PC-3 (cell line): ENCODE measurements at regions of chr5 and their contacts with region 1.

Region 1: GRCh38 chr5:140639148-140639979 is at the start of gene TMCO6:
- DNase-seq: peak; percentile 93
- ATAC-seq: peak; percentile 97
- H3K4me3 ChIP-seq: peak within 1 kb of the TSS; percentile 97
- H3K27ac ChIP-seq: peak within 1 kb of the TSS; percentile 39; the same call in 1 of the 2 replicates
- H3K4me1 ChIP-seq: peaks cover 9% of the 10 kb centered on the region; the same call in 1 of the 2 replicates
- H3K27me3 ChIP-seq: no peaks in the 10 kb centered on the region
- CTCF ChIP-seq: peak; percentile 56
- total RNA-seq, gene TMCO6: 12.7 and 16.5 TPM in 2 replicates

Region 2: GRCh38 chr5:140182803-140183367 is 456.5 kb before region 1 on chr5:
- CTCF ChIA-PET with region 1: no interaction called
- POLR2A ChIA-PET with region 1: interaction called, 17 read pairs
- intact Hi-C with region 1: no loop called
- DNase-seq: no peak
- ATAC-seq: no peak
- H3K4me3 ChIP-seq: no peak overlapping the region
- H3K27ac ChIP-seq: no peak overlapping the region
- H3K4me1 ChIP-seq: peaks cover 16% of the 10 kb centered on the region
- H3K27me3 ChIP-seq: no peaks in the 10 kb centered on the region
- CTCF ChIP-seq: no peak

Region 3: GRCh38 chr5:140564196-140565023 is 75.0 kb before region 1 on chr5 and contains the starts of genes APBB3 and SLC35A4:
- CTCF ChIA-PET with region 1: no interaction called
- POLR2A ChIA-PET with region 1: no interaction called
- intact Hi-C with region 1: loop called (anchors 2 kb)
- DNase-seq: peak; percentile 98
- ATAC-seq: peak; percentile 89
- H3K4me3 ChIP-seq: peak within 1 kb of the TSS; percentile 82
- H3K27ac ChIP-seq: peak within 1 kb of the TSS; percentile 64
- H3K4me1 ChIP-seq: peaks cover 21% of the 10 kb centered on the region
- H3K27me3 ChIP-seq: no peaks in the 10 kb centered on the region
- CTCF ChIP-seq: no peak
- total RNA-seq, gene APBB3: 11.4 and 13.6 TPM in 2 replicates
- total RNA-seq, gene SLC35A4: 25.0 and 29.1 TPM in 2 replicates